ENCODE measurements at regions of chrX and their contacts with region 1.

Region 1: DNA sequence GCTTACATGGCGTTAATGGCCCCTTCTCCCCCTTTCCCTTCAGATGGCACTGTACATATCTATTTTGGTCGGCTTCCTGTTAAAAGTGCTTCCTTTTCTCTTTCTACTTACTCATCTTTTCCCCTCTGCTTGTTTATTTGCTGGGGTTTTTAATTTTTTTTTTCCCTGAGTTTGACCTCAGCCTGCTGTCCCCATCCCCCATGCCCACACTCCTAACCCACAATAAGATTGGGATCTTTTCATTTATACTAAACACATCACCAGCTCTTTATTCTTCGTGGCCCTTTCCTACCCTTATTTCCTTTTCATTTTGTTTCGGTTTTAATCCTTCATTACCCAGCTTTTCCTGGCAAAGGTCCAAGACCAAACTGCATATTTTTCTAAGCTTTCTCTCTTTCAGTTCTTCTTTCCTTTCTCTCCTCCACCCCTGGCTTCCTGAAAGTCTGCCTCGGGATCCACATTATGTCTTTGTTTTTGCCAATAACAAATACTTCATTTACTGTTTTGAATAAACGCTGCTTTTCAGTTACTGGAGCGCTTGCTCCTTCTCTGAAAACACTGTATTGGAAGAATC is 152.0 kb upstream of the USP9X start:
- DNase-seq: peak in 7 of 9 donors; percentile 10 to 37 (median 27)
- ATAC-seq: peak; percentile 38
- H3K4me3 ChIP-seq: peak overlapping the region; percentile 51
- H3K4me3 Mint-ChIP-seq: peak overlapping the region; percentile 79 to 91 (median 88)
- H3K27ac ChIP-seq: peak overlapping the region; percentile 59
- H3K27ac Mint-ChIP-seq: peak overlapping the region; percentile 82 to 97 (median 94)
- H3K4me1 ChIP-seq: peaks cover 0 to 10% of the 10 kb centered on the region in 2 donors
- H3K4me1 Mint-ChIP-seq: peaks cover 9 to 34% (median 22%) of the 10 kb centered on the region in 7 donors
- H3K27me3 ChIP-seq: no peaks in the 10 kb centered on the region
- H3K27me3 Mint-ChIP-seq: no peaks in the 10 kb centered on the region

Region 2: GRCh38 chrX:40971736-40972135 is 38.5 kb after region 1 on chrX:
- CTCF ChIA-PET with region 1: no interaction called
- POLR2A ChIA-PET with region 1: no interaction called
- intact Hi-C with region 1: no loop called
- DNase-seq: no peak
- ATAC-seq: no peak
- H3K4me3 ChIP-seq: no peak overlapping the region
- H3K4me3 Mint-ChIP-seq: no peak overlapping the region
- H3K27ac ChIP-seq: no peak overlapping the region
- H3K27ac Mint-ChIP-seq: no peak overlapping the region
- H3K4me1 ChIP-seq: no peaks in the 10 kb centered on the region
- H3K4me1 Mint-ChIP-seq: peaks cover 0 to 4% (median 0%) of the 10 kb centered on the region in 7 donors
- H3K27me3 ChIP-seq: no peaks in the 10 kb centered on the region
- H3K27me3 Mint-ChIP-seq: no peaks in the 10 kb centered on the region

Region 3: DNA sequence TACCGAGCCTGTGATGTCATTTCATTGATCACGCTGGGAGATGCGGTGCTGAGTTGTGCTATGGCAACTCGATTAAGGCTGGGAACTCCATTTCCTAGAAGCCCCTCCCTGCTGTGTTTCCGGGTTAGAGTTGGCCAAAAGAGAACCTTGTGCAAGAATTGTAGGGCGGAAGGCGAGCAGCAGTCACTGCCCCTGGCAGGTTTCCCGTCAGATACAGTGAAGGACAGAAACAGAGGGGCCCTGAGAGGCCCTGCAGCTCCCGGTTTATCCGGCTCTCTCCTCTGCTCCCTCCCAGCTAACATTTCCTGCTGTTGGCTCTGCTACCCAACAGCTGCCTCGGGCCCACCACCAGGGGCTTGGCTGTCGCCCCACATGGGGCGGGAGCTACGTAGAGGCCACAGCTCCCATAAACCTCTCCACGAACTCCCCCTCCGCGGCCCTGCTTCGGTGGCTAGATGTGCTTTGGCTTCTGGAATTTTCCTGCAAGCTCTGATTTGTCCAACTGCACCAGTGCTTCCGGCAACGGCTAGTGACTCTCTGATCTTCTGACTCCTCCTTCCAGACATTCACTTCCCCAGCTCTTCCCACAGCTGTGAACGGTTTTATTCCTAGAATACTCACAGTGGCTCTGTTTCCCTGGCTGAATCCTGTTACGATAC is 77.1 kb after region 1 on chrX:
- CTCF ChIA-PET with region 1: no interaction called
- POLR2A ChIA-PET with region 1: no interaction called
- intact Hi-C with region 1: loop called in 1 of 2 experiments (anchors 1 kb)
- DNase-seq: peak; percentile 8 to 71 (median 59)
- ATAC-seq: peak; percentile 93
- H3K4me3 ChIP-seq: peak overlapping the region; percentile 32
- H3K4me3 Mint-ChIP-seq: peak overlapping the region; percentile 67 to 81 (median 76)
- H3K27ac ChIP-seq: peak overlapping the region; percentile 68
- H3K27ac Mint-ChIP-seq: peak overlapping the region; percentile 88 to 94 (median 91)
- H3K4me1 ChIP-seq: peaks cover 7% of the 10 kb centered on the region in 2 donors
- H3K4me1 Mint-ChIP-seq: peaks cover 13 to 30% (median 21%) of the 10 kb centered on the region in 7 donors
- H3K27me3 ChIP-seq: no peaks in the 10 kb centered on the region
- H3K27me3 Mint-ChIP-seq: peaks cover 0 to 3% (median 0%) of the 10 kb centered on the region in 5 donors